Panc1 (cell line): ENCODE measurements at regions of chr1 and their contacts with region 1.

Region 1: GRCh38 chr1:27154991-27155781 is at the start of gene SLC9A1:
- DNase-seq: peak; percentile 96
- ATAC-seq: peak; percentile 96
- H3K4me3 ChIP-seq: peak within 1 kb of the TSS; percentile 58 to 85
- H3K27ac ChIP-seq: peak within 1 kb of the TSS; percentile 73
- H3K4me1 ChIP-seq: peaks cover 29% of the 10 kb centered on the region
- H3K27me3 ChIP-seq: no peaks in the 10 kb centered on the region
- CTCF ChIP-seq: peak; percentile 97
- total RNA-seq, gene SLC9A1: 31.3 TPM

Region 2: DNA sequence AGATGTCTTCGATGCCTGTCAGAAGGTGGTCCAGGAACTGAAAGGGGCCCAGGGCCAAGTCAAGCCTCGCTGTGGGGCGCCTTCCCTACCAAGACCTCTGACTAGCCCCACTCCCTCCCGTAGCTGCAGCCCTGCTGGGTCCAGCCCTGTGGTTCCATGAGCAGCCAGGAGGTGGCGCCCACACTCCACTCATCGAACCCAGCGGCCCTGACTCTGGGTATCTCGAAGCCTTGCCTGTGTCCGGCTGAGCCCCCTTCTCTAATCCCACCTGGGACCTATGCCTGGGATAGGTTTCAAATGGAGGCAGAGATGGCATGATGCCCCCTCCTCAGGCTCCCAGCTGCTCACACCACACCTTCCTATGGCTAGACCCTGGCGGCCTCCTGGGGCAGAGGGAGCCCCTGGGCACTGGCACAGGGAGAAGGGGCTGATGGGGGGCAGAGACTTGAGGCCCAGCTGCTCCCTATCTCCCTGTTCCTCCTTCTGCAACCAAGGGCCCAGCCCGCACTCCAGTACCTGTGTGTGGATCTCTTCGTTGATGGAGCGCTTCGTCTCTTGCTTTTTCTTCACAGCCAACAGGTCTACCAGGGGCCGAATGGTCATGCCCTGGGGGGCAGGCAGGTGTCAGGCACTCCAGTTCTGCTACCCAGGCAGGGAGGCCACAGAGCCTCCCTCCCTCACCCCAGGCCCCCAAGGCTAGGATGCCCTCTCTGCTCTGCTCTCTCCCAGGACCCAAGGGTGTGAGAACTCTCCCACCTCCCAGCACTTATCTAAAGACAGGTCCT is 52.3 kb before region 1 on chr1:
- CTCF ChIA-PET with region 1: no interaction called
- POLR2A ChIA-PET with region 1: interaction called, 11 read pairs
- in situ Hi-C with region 1: no loop called
- intact Hi-C with region 1: no loop called
- DNase-seq: no peak
- ATAC-seq: peak; percentile 80
- H3K4me3 ChIP-seq: no peak overlapping the region
- H3K27ac ChIP-seq: no peak overlapping the region
- H3K4me1 ChIP-seq: peaks cover 13% of the 10 kb centered on the region
- H3K27me3 ChIP-seq: no peaks in the 10 kb centered on the region
- CTCF ChIP-seq: peak; percentile 97

Region 3: GRCh38 chr1:27111626-27112573 is 43.3 kb before region 1 on chr1:
- CTCF ChIA-PET with region 1: interaction called, 15 read pairs
- POLR2A ChIA-PET with region 1: interaction called, 3 read pairs
- in situ Hi-C with region 1: no loop called
- intact Hi-C with region 1: no loop called
- DNase-seq: peak; percentile 97
- ATAC-seq: peak; percentile 95
- H3K4me3 ChIP-seq: no peak overlapping the region
- H3K27ac ChIP-seq: peak overlapping the region; percentile 24
- H3K4me1 ChIP-seq: peaks cover 11% of the 10 kb centered on the region
- H3K27me3 ChIP-seq: no peaks in the 10 kb centered on the region
- CTCF ChIP-seq: no peak

Region 4: DNA sequence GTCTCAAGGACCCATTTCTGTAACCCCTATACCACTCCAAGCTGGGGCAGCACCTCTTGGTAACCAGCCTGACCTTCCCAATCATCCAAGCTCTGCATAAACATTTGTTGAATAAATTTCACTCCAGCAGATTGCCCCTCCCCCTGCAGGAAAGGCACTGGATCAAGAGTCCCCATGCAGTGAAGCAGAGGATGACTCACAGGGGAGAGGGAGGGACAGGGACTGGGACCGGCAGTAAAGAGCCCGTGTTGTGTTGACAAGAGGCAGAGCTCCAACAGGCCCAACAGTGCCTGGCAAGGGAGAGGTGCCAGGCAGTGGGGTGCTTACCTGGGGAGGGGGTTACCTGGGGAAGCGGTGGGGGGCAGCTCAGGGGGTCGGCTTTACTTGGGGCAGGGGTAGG is 32.5 kb before region 1 on chr1:
- CTCF ChIA-PET with region 1: interaction called, 3 read pairs
- POLR2A ChIA-PET with region 1: interaction called, 11 read pairs
- in situ Hi-C with region 1: no loop called
- intact Hi-C with region 1: no loop called
- DNase-seq: peak; percentile 45
- ATAC-seq: peak; percentile 92
- H3K4me3 ChIP-seq: no peak overlapping the region
- H3K27ac ChIP-seq: no peak overlapping the region
- H3K4me1 ChIP-seq: peaks cover 9% of the 10 kb centered on the region; the same call in 1 of the 2 replicates
- H3K27me3 ChIP-seq: no peaks in the 10 kb centered on the region
- CTCF ChIP-seq: no peak

Region 5: DNA sequence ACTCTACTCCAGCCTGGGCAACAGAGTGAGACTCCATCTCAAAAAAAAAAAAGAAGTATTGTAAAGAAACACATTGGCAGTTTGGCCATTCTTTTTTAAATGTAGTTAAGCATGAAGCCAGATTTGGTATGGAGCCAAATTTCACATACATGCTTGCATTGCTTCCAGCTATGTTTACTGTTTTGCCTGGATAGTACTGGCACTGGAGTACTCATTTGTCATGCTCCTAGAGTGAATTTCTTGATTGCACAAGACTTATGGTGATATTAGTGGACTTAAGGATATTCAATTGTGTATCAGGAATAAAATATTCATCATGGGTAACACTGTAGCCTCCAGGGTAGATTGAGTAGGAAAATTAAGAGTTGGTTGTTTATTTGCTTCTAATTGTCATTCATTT is 24.2 kb after region 1 on chr1:
- CTCF ChIA-PET with region 1: interaction called, 12 read pairs
- POLR2A ChIA-PET with region 1: interaction called, 13 read pairs
- in situ Hi-C with region 1: no loop called
- intact Hi-C with region 1: no loop called
- DNase-seq: no peak
- ATAC-seq: no peak
- H3K4me3 ChIP-seq: no peak overlapping the region
- H3K27ac ChIP-seq: no peak overlapping the region
- H3K4me1 ChIP-seq: no peaks in the 10 kb centered on the region
- H3K27me3 ChIP-seq: no peaks in the 10 kb centered on the region
- CTCF ChIP-seq: no peak

Region 6: DNA sequence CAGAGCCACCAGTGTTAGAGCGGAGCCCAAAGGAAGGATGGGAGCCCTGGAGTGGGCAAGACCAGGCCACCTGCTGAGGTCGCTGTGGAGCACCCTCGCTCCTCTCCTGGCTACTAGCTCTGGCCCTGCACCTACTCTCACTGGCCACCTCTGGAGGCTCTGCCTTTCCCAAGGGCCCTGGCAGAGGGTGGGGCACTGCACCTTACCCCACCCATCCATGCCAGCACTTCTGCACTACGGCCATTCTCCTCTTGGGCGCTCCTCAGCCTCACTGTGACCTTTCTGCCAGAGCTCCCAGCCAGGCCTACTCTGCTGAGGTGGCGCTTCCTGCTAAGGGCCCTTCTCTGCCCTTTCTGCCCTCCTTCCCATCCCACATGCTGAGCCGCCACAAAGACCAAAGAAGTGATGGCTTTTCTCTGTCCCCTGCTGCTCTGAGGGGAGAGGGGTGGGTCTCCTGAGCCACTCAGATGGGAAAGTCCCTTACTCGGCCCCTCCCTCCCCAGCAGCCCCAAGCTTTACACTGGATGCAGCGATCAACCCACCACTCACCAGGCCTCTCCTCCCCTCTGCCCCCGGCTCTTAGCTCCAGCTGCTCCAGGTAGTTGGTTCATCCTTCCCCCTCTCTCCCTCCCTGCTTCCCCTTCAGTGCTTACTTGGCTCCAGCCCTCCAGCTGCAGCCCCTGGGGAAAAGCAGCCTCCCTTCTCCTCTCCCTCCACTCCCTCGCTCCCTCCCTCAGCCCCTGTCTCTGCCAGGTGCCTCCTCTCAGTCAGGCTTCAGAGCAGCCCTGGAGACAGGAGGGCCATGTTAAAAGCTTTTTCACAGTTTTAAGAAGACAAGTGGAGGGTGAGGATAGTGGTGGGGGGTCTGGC is 151.9 kb after region 1 on chr1:
- CTCF ChIA-PET with region 1: no interaction called
- POLR2A ChIA-PET with region 1: no interaction called
- in situ Hi-C with region 1: no loop called
- intact Hi-C with region 1: no loop called
- DNase-seq: no peak
- ATAC-seq: peak; percentile 75
- H3K4me3 ChIP-seq: no peak overlapping the region
- H3K27ac ChIP-seq: no peak overlapping the region
- H3K4me1 ChIP-seq: no peaks in the 10 kb centered on the region
- H3K27me3 ChIP-seq: no peaks in the 10 kb centered on the region
- CTCF ChIP-seq: no peak; the same call in 1 of the 2 replicates

Region 7: DNA sequence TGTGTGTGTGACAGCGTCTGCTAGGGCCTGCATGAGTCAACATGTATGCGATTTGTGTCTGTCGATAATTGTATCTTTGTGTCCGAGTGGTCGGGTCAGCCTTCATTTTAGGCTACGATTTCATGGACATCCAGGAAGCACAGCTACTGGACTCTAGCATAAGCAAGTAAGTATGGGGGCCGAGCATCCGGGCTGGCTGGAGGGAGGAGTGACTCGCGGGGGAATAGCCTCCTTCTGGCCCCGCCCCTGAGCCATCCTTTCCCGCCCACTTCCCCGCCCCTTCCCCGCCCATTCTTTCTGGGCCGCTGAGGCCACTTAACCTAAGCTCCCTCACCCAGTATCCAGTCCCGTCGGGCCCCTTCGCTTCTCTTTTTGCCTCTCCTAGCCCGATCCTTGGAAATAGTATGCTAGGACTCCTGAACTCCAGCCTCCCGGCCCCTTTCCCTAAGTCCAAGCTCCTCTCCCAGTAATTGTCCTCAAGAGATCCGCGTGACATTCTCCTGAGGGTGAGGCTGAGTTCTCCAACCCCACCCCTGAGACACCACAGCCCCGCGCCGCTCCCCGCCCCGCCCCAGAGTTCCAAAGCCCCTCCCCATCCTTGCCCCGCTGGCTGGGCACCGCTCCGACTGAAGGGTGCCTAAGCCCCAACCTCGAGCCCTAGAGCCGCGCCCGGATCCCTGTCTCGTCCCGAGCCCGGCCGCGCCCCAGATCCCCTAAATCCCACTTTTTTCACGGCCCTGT is 210.4 kb after region 1 on chr1:
- CTCF ChIA-PET with region 1: interaction called, 5 read pairs
- POLR2A ChIA-PET with region 1: interaction called, 10 read pairs
- in situ Hi-C with region 1: no loop called
- intact Hi-C with region 1: no loop called
- DNase-seq: peak; percentile 87
- ATAC-seq: peak; percentile 86
- H3K4me3 ChIP-seq: peak overlapping the region; percentile 74 to 77
- H3K27ac ChIP-seq: peak overlapping the region; percentile 82
- H3K4me1 ChIP-seq: peaks cover 15% of the 10 kb centered on the region
- H3K27me3 ChIP-seq: no peaks in the 10 kb centered on the region
- CTCF ChIP-seq: no peak